CD8-positive, alpha-beta memory T cell (primary cell): ENCODE measurements at regions of chr4 and their contacts with region 1.

Region 1: GRCh38 chr4:17614416-17615299 is at the start of gene MED28:
- DNase-seq: peak; percentile 93 to 98 (median 94)
- H3K4me3 ChIP-seq: peak within 1 kb of the TSS; percentile 87
- H3K4me3 Mint-ChIP-seq: peak within 1 kb of the TSS; percentile 95 to 100 (median 98)
- H3K27ac ChIP-seq: peak within 1 kb of the TSS; percentile 94
- H3K27ac Mint-ChIP-seq: peak within 1 kb of the TSS; percentile 94 to 100 (median 98)
- H3K4me1 ChIP-seq: peaks cover 42% of the 10 kb centered on the region
- H3K4me1 Mint-ChIP-seq: peaks cover 49 to 58% (median 52%) of the 10 kb centered on the region in 3 donors
- H3K27me3 ChIP-seq: no peaks in the 10 kb centered on the region
- H3K27me3 Mint-ChIP-seq: no peaks in the 10 kb centered on the region
- total RNA-seq, gene MED28: 49.4 to 51.7 TPM

Region 2: DNA sequence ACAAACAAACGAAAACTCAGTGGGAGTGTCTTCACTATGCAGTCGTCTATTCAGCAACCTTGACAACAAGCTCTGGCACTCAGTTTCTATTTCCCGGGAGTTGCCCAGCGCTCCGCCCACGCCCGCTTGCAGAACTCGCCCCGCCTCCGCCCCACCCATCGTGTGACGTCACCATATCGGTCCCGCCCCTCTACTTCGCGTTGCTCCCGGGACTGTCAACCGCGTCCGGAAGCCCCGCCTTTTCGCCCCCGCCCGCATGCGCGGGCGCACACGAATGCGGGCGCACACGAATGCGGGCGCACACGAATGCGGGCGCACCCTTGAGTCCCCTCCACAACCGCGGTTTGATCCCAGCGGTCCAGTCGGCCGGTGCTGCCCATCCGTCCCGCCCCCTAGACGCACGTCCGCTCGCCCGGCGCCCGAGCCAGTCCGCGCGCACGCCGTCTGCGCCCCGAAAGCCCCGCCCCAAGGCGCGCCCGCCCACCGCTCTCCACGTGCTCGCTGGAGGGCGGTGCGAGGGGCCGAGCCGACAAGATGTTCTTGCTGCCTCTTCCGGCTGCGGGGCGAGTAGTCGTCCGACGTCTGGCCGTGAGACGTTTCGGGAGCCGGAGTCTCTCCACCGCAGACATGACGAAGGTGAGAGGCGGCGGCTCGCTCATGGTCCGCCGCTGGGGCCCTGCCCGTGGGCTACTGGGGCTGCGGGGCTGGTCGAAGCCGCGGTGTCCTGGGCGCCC is 37.6 kb before region 1 on chr4 and contains the start of gene LAP3:
- CTCF ChIA-PET with region 1: interaction called, 9 read pairs
- POLR2A ChIA-PET with region 1: interaction called, 22 read pairs
- DNase-seq: peak; percentile 98 to 99 (median 98)
- H3K4me3 ChIP-seq: peak within 1 kb of the TSS; percentile 87
- H3K4me3 Mint-ChIP-seq: peak within 1 kb of the TSS; percentile 88 to 95 (median 93)
- H3K27ac ChIP-seq: peak within 1 kb of the TSS; percentile 95
- H3K27ac Mint-ChIP-seq: peak within 1 kb of the TSS; percentile 96 to 100 (median 98)
- H3K4me1 ChIP-seq: peaks cover 23% of the 10 kb centered on the region
- H3K4me1 Mint-ChIP-seq: peaks cover 25 to 43% (median 36%) of the 10 kb centered on the region in 3 donors
- H3K27me3 ChIP-seq: no peaks in the 10 kb centered on the region
- H3K27me3 Mint-ChIP-seq: peaks cover 0 to 2% of the 10 kb centered on the region in 2 donors
- total RNA-seq, gene LAP3: 89.0 to 93.0 TPM

Region 3: DNA sequence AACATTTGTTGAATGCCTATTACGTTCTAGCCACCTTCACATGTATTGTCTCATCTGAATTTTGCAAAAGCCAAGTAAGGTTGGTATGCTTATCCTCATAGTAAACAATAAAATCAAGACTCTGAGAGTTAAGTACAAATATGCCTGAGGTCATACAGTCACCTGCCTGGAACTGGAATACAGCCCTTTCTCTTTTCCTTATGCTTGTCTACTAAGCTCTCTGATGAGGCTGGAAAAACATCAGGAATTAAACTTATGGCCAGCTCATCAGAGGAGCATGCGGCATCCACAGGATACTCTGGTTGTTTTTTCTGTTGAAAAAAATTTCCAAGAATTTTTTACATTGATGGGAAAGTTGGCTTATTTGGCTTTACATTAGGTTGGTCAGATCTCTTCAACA is 231.6 kb after region 1 on chr4:
- CTCF ChIA-PET with region 1: no interaction called
- POLR2A ChIA-PET with region 1: no interaction called
- DNase-seq: no peak
- H3K4me3 ChIP-seq: no peak overlapping the region
- H3K4me3 Mint-ChIP-seq: no peak overlapping the region
- H3K27ac ChIP-seq: no peak overlapping the region
- H3K27ac Mint-ChIP-seq: no peak overlapping the region
- H3K4me1 ChIP-seq: no peaks in the 10 kb centered on the region
- H3K4me1 Mint-ChIP-seq: no peaks in the 10 kb centered on the region
- H3K27me3 ChIP-seq: no peaks in the 10 kb centered on the region
- H3K27me3 Mint-ChIP-seq: no peaks in the 10 kb centered on the region